K562 (cell line): ENCODE measurements at regions of chr16 and their contacts with region 1.

Region 1: GRCh38 chr16:66608241-66609138 is 4.0 kb downstream of the CMTM3 start:
- DNase-seq: peak; percentile 83 to 91 (median 87)
- ATAC-seq: peak; percentile 74
- H3K4me3 ChIP-seq: no peak overlapping the region
- H3K27ac ChIP-seq: peak overlapping the region; percentile 33
- H3K4me1 ChIP-seq: peaks cover 24 to 51% of the 10 kb centered on the region in 2 experiments
- H3K27me3 ChIP-seq: no peaks in the 10 kb centered on the region
- CTCF ChIP-seq: peak; percentile 93 to 96 (median 96)
- EP300 ChIP-seq: no peak
- POLR2A ChIP-seq: no peak
- RAD21 ChIP-seq: peak; percentile 77 to 90

Region 2: GRCh38 chr16:66588981-66589713 is 19.3 kb before region 1 on chr16:
- CTCF ChIA-PET with region 1: no interaction called
- POLR2A ChIA-PET with region 1: no interaction called
- in situ Hi-C with region 1: no loop called
- intact Hi-C with region 1: no loop called
- DNase-seq: peak; percentile 72 to 82 (median 80)
- ATAC-seq: peak; percentile 99
- H3K4me3 ChIP-seq: no peak overlapping the region
- H3K27ac ChIP-seq: no peak overlapping the region
- H3K4me1 ChIP-seq: no peaks in the 10 kb centered on the region; a peak in 1 of 5 replicates
- H3K27me3 ChIP-seq: no peaks in the 10 kb centered on the region
- CTCF ChIP-seq: peak; percentile 97 to 99 (median 98)
- EP300 ChIP-seq: no peak
- POLR2A ChIP-seq: no peak
- RAD21 ChIP-seq: peak; percentile 97 to 98

Region 3: GRCh38 chr16:66618588-66619375 is 10.3 kb after region 1 on chr16:
- CTCF ChIA-PET with region 1: no interaction called
- POLR2A ChIA-PET with region 1: interaction called, 31 read pairs
- in situ Hi-C with region 1: no loop called
- intact Hi-C with region 1: no loop called
- DNase-seq: peak in 1 of 4 experiments; percentile 60
- ATAC-seq: peak; percentile 12
- H3K4me3 ChIP-seq: no peak overlapping the region
- H3K27ac ChIP-seq: peak overlapping the region; percentile 78
- H3K4me1 ChIP-seq: peaks cover 40 to 64% of the 10 kb centered on the region in 2 experiments
- H3K27me3 ChIP-seq: no peaks in the 10 kb centered on the region
- CTCF ChIP-seq: no peak
- EP300 ChIP-seq: no peak
- POLR2A ChIP-seq: no peak
- RAD21 ChIP-seq: no peak

Region 4: GRCh38 chr16:66650707-66651473 is 42.4 kb after region 1 on chr16:
- CTCF ChIA-PET with region 1: no interaction called
- POLR2A ChIA-PET with region 1: interaction called, 3 read pairs
- in situ Hi-C with region 1: no loop called
- intact Hi-C with region 1: loop called (anchors 2 kb)
- DNase-seq: peak; percentile 74 to 88 (median 78)
- ATAC-seq: peak; percentile 99
- H3K4me3 ChIP-seq: no peak overlapping the region
- H3K27ac ChIP-seq: no peak overlapping the region
- H3K4me1 ChIP-seq: peaks cover 0 to 7% of the 10 kb centered on the region in 2 experiments; a peak in 3 of 5 replicates
- H3K27me3 ChIP-seq: no peaks in the 10 kb centered on the region
- CTCF ChIP-seq: peak; percentile 92 to 97 (median 95)
- EP300 ChIP-seq: no peak
- POLR2A ChIP-seq: no peak
- RAD21 ChIP-seq: peak; percentile 31 to 54; a peak in 3 of 4 replicates

Region 5: GRCh38 chr16:66660422-66661209 is 52.1 kb after region 1 on chr16:
- CTCF ChIA-PET with region 1: no interaction called
- POLR2A ChIA-PET with region 1: interaction called, 3 read pairs
- in situ Hi-C with region 1: no loop called
- intact Hi-C with region 1: loop called (anchors 1 kb)
- DNase-seq: peak; percentile 52 to 92 (median 72)
- ATAC-seq: peak; percentile 98
- H3K4me3 ChIP-seq: no peak overlapping the region
- H3K27ac ChIP-seq: peak overlapping the region; percentile 77
- H3K4me1 ChIP-seq: peaks cover 19 to 30% of the 10 kb centered on the region in 2 experiments; a peak in 4 of 5 replicates
- H3K27me3 ChIP-seq: no peaks in the 10 kb centered on the region
- CTCF ChIP-seq: peak; percentile 48 to 58 (median 54)
- EP300 ChIP-seq: peak; percentile 71; the same call in 1 of the 2 replicates
- POLR2A ChIP-seq: peak; percentile 26; the same call in 1 of the 2 replicates
- RAD21 ChIP-seq: peak; percentile 13 to 51; a peak in 2 of 4 replicates

Region 6: DNA sequence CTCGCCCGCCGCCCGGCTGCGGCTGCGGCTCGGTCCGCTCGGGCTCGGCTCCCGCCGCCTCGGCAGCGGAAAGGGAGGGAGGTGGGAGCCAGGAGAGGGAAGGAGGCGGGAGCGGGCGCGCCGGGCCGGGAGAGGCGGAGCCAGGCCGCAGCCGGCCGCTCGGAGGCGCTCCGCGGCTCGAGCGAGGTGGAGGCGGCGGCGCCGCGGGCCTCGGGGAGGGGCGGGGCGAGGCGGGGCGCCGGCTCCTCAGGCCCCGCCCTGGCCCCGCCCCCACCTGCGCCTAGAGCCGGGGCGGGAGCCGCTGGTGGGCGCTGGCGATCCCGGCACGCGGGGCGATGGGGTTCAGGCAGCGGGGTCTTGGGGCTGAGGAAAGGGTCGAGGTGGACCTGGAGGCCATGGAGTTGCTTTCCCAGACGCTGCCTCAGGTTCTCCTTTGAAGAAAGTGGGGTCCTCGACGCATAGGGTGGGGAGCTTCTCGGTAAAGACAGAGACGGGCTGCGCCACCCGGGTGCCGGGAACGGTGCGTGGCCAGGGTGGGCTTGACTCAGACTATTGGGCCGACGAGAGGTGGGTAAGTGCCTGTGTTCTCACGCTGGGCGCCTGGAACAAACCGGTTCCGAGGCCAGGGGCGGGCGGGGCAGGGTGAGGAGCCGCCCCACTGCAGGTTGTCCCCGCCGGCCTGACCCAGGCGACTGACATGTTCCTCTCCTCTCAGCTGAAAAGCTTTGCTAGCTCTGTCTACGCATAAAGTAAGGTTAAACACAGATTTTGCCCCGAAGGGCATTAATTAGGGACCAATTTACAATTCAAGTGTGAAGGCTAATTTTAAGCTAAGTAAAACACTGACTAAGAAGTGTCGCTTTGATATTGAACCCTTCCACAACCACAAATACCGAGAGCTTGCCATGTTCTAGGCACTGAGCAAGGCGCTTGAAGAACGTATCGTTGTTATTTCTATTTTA is 88.5 kb after region 1 on chr16 and contains the start of gene CMTM4:
- CTCF ChIA-PET with region 1: no interaction called
- POLR2A ChIA-PET with region 1: no interaction called
- in situ Hi-C with region 1: no loop called
- intact Hi-C with region 1: loop called (anchors 5 kb)
- DNase-seq: peak; percentile 90 to 97 (median 96)
- ATAC-seq: peak; percentile 94
- H3K4me3 ChIP-seq: peak within 1 kb of the TSS; percentile 83
- H3K27ac ChIP-seq: peak within 1 kb of the TSS; percentile 87
- H3K4me1 ChIP-seq: peaks cover 19 to 25% of the 10 kb centered on the region in 2 experiments
- H3K27me3 ChIP-seq: no peaks in the 10 kb centered on the region
- CTCF ChIP-seq: peak; percentile 39 to 53 (median 41); a peak in 4 of 6 replicates
- EP300 ChIP-seq: no peak
- POLR2A ChIP-seq: peak; percentile 73
- RAD21 ChIP-seq: peak in 1 of 2 experiments; percentile 22; a peak in 1 of 4 replicates
- polyA plus RNA-seq, gene CMTM4: 2.0 to 2.3 TPM

Region 7: DNA sequence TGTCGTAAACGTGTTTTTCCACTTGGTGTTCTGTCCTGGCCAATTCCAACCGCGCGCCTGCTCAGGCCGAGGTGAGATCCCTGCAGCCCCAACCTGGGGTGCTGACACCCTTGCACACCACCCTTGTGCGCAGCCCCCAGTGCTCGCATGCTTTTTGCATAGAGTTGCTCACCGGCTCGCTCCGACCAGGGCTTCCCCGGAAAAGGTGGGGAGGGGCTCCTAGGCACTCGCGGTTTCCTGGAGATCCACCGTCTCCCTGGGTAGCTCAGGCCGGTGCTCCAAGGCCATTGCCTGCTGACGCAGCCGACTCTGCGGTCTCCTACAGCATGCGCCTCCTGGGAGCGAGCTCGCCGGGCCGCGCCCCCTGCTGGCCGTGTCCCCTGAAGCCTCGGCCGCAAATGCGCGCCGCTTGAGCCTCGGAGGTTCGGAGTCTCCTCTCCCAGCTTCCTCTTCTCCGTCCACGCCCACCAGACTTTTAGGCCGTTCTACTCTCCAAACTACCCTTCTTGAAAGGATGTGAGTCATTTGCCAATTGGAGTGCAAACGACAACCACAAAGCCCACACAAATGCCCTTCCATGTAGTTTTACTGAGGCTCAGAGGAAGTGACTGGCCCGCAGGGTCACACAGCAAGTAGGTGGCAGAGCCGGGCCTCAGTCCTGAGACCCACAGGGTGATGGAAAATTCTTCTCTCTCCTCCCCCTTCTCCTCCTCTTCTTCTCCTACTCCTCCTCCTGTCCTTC is 264.6 kb after region 1 on chr16:
- CTCF ChIA-PET with region 1: interaction called, 9 read pairs
- POLR2A ChIA-PET with region 1: no interaction called
- in situ Hi-C with region 1: loop called (anchors 5 kb)
- intact Hi-C with region 1: loop called (anchors 1 kb)
- DNase-seq: peak; percentile 81 to 95 (median 86)
- ATAC-seq: peak; percentile 98
- H3K4me3 ChIP-seq: peak overlapping the region; percentile 20
- H3K27ac ChIP-seq: peak overlapping the region; percentile 68
- H3K4me1 ChIP-seq: peaks cover 6 to 16% of the 10 kb centered on the region in 2 experiments; a peak in 4 of 5 replicates
- H3K27me3 ChIP-seq: no peaks in the 10 kb centered on the region
- CTCF ChIP-seq: peak; percentile 94 to 97 (median 95)
- EP300 ChIP-seq: peak; percentile 4; the same call in 1 of the 2 replicates
- POLR2A ChIP-seq: peak; percentile 55; the same call in 1 of the 2 replicates
- RAD21 ChIP-seq: peak; percentile 49 to 72